BJ (cell line): ENCODE measurements at regions of chr3 and their contacts with region 1.

Region 1: GRCh38 chr3:10263646-10264363 is 15.5 kb downstream of the TATDN2 start:
- DNase-seq: no peak
- H3K4me3 ChIP-seq: no peak overlapping the region
- H3K27me3 ChIP-seq: no peaks in the 10 kb centered on the region
- CTCF ChIP-seq: peak; percentile 57

Region 2: DNA sequence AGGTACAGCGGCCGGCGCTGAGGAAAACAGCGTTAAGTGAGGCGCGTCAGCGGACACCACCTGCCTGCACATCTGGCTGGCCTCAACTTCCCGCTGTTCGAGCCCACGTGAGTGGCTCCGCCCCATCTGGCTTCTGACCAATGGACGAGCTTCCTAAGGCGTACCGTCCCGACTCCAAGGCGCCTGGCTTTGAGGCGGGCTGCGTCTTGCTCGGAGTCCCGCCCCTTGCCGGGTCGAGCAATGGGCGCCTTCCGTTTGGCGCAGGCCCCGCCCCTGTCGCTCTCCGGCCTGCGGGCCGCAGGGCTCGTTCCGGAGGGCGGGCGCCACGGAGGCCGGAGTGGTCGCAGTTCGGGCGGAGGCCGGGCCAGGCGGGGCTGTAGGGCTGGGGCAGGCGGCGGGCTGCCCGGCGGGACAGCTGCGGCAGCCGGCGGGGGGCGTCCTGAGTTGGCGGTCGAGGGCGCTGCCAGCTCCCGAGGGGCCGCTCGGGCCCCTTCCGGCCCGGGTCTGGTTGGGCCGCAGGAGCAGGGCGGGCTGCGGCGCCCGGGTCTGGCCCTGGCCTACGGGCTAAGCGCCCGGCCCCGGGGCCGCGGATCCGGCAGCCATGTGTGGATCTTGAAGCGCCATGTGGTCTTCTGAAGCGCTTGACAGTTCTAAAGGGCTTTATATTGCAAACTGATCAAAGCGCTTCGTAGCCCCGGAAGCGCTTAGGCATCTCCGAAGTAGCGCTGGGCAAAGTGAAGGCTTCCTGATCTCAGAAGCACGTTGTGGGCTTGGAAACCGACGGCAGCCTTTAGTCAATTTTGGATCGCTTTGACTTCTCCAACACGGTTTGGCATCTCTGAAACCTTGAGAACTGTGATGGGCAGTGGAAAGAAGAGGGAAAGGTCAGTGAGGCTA is 15.4 kb before region 1 on chr3 and contains the start of gene TATDN2:
- CTCF ChIA-PET with region 1: interaction called, 10 read pairs
- POLR2A ChIA-PET with region 1: no interaction called
- DNase-seq: peak; percentile 78
- H3K4me3 ChIP-seq: peak within 1 kb of the TSS; percentile 59
- H3K27me3 ChIP-seq: no peaks in the 10 kb centered on the region
- CTCF ChIP-seq: no peak
- polyA plus RNA-seq, gene TATDN2: 14.9 and 15.3 TPM in 2 replicates

Region 3: GRCh38 chr3:10253731-10254130 is 10.1 kb before region 1 on chr3:
- CTCF ChIA-PET with region 1: interaction called, 10 read pairs
- POLR2A ChIA-PET with region 1: no interaction called
- DNase-seq: no peak
- H3K4me3 ChIP-seq: no peak overlapping the region
- H3K27me3 ChIP-seq: no peaks in the 10 kb centered on the region
- CTCF ChIP-seq: no peak

Region 4: GRCh38 chr3:10309736-10310135 is 45.9 kb after region 1 on chr3:
- CTCF ChIA-PET with region 1: no interaction called
- POLR2A ChIA-PET with region 1: no interaction called
- DNase-seq: no peak
- H3K4me3 ChIP-seq: no peak overlapping the region
- H3K27me3 ChIP-seq: no peaks in the 10 kb centered on the region
- CTCF ChIP-seq: no peak